ENCODE measurements at regions of chr4 and their contacts with region 1.

Region 1: DNA sequence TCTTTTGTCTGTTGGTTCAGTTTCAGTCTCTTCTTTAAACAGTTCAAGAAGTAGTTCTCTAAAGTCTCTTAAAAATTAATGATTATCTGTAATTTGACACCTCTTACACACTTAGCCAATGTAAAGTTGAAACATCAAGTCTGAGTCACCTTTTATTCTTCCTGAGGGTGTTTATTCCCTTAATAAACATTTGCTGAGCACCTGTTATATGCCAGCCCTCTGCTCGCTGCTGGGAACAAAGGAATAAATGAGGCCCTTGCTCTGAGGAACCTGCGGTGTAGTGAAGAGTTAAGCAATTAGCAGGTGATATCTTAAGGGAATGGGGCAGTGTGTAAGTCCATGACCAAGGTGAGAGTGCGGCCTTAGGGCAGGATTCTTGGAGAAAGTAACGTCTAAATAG is 5.1 kb upstream of the NDNF start:
- DNase-seq: no peak
- ATAC-seq: no peak
- H3K4me3 ChIP-seq: no peak overlapping the region
- H3K4me3 Mint-ChIP-seq: no peak overlapping the region
- H3K27ac ChIP-seq: no peak overlapping the region
- H3K27ac Mint-ChIP-seq: peak overlapping the region in 1 of 2 donors; percentile 33
- H3K4me1 ChIP-seq: peaks cover 4 to 7% of the 10 kb centered on the region in 2 experiments
- H3K4me1 Mint-ChIP-seq: peaks cover 11 to 14% (median 11%) of the 10 kb centered on the region in 3 donors
- H3K27me3 ChIP-seq: peaks cover 5 to 18% of the 10 kb centered on the region in 2 experiments
- H3K27me3 Mint-ChIP-seq: peaks cover 30 to 33% of the 10 kb centered on the region in 2 donors

Region 2: GRCh38 chr4:119897260-119897659 is 1180.2 kb before region 1 on chr4:
- CTCF ChIA-PET with region 1: no interaction called
- POLR2A ChIA-PET with region 1: no interaction called
- DNase-seq: no peak
- ATAC-seq: no peak
- H3K4me3 ChIP-seq: no peak overlapping the region
- H3K4me3 Mint-ChIP-seq: no peak overlapping the region
- H3K27ac ChIP-seq: no peak overlapping the region
- H3K27ac Mint-ChIP-seq: no peak overlapping the region
- H3K4me1 ChIP-seq: no peaks in the 10 kb centered on the region
- H3K4me1 Mint-ChIP-seq: no peaks in the 10 kb centered on the region
- H3K27me3 ChIP-seq: no peaks in the 10 kb centered on the region
- H3K27me3 Mint-ChIP-seq: no peaks in the 10 kb centered on the region

Region 3: GRCh38 chr4:120886191-120886590 is 191.3 kb before region 1 on chr4:
- CTCF ChIA-PET with region 1: no interaction called
- POLR2A ChIA-PET with region 1: interaction called in 1 of 2 experiments, 10 read pairs
- DNase-seq: no peak
- ATAC-seq: no peak
- H3K4me3 ChIP-seq: no peak overlapping the region
- H3K4me3 Mint-ChIP-seq: no peak overlapping the region
- H3K27ac ChIP-seq: no peak overlapping the region
- H3K27ac Mint-ChIP-seq: no peak overlapping the region
- H3K4me1 ChIP-seq: no peaks in the 10 kb centered on the region
- H3K4me1 Mint-ChIP-seq: no peaks in the 10 kb centered on the region
- H3K27me3 ChIP-seq: peaks cover 0 to 4% of the 10 kb centered on the region in 2 experiments
- H3K27me3 Mint-ChIP-seq: no peaks in the 10 kb centered on the region

Region 4: GRCh38 chr4:121108557-121108956 is 31.1 kb after region 1 on chr4:
- CTCF ChIA-PET with region 1: no interaction called
- POLR2A ChIA-PET with region 1: no interaction called
- DNase-seq: no peak
- ATAC-seq: no peak
- H3K4me3 ChIP-seq: no peak overlapping the region
- H3K4me3 Mint-ChIP-seq: no peak overlapping the region
- H3K27ac ChIP-seq: no peak overlapping the region
- H3K27ac Mint-ChIP-seq: no peak overlapping the region
- H3K4me1 ChIP-seq: peaks cover 0 to 5% of the 10 kb centered on the region in 2 experiments
- H3K4me1 Mint-ChIP-seq: peaks cover 2 to 5% (median 2%) of the 10 kb centered on the region in 3 donors
- H3K27me3 ChIP-seq: peaks cover 0 to 3% of the 10 kb centered on the region in 2 experiments
- H3K27me3 Mint-ChIP-seq: no peaks in the 10 kb centered on the region

Region 5: DNA sequence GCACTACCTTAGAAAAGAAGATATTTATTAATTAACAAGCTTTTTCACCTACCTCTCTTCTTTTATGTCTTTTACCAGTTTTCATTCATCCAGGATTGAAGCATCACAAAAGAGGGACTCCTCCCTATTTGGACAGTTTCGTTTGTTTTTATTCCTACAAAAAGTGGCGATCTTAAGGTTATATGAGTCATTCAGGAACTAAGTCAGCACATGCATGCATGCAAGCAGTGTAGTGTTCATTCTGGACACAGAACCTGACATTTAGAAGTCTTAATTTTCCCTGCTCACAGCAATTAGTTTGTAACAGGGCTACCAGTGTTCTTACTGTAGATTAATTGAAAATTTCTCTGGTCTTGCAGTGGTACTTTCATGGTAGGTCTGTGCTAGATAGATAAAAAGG is 351.2 kb after region 1 on chr4:
- CTCF ChIA-PET with region 1: no interaction called
- POLR2A ChIA-PET with region 1: no interaction called
- DNase-seq: no peak
- ATAC-seq: no peak
- H3K4me3 ChIP-seq: no peak overlapping the region
- H3K4me3 Mint-ChIP-seq: no peak overlapping the region
- H3K27ac ChIP-seq: no peak overlapping the region
- H3K27ac Mint-ChIP-seq: no peak overlapping the region
- H3K4me1 ChIP-seq: no peaks in the 10 kb centered on the region
- H3K4me1 Mint-ChIP-seq: no peaks in the 10 kb centered on the region
- H3K27me3 ChIP-seq: no peaks in the 10 kb centered on the region
- H3K27me3 Mint-ChIP-seq: peaks cover 9 to 20% of the 10 kb centered on the region in 2 donors